Astrocyte of the cerebellum (primary cell): ENCODE measurements at regions of chr6 and their contacts with region 1.

Region 1: DNA sequence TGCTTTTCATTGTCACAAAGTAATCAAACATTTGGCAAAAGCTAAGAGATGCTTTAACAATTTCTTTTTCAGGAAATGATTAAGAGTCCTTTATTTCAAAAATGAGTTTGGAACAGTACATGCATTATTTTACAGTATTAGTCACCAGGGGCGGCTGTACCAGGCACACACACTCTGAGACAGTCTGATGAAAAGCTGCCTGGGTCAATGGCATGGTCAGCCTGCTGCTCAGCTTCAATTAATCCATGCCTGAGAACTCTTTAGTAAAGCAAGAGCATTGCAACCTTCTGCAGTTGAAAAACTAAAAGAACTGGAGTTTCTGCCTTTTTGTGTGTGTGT is 105.5 kb downstream of the TULP4 start:
- DNase-seq: peak; percentile 32
- H3K4me3 ChIP-seq: no peak overlapping the region
- CTCF ChIP-seq: no peak

Region 2: DNA sequence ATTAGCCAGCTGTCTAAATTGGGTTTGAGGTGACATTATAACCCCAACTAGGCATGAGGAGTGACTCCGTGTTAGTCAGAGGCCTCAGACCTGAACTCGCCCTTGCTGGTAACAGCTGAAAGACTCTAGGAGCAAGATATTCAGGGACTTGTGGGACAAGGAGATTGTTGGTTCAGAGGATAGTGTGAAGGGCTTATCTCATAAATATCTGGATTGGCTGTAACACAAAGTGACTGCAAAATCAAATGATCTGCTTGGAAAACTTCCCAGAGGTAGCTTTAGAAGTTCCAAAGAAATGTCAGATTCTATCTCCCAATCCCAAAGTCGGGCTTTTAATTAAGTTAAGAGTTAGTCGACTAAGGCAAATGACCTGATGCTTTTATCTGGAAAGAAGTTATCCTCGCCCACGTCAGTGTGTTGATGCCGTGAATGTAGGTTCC is 33.0 kb before region 1 on chr6:
- in situ Hi-C with region 1: loop called (anchors 5 kb)
- DNase-seq: no peak
- H3K4me3 ChIP-seq: no peak overlapping the region
- CTCF ChIP-seq: no peak

Region 3: DNA sequence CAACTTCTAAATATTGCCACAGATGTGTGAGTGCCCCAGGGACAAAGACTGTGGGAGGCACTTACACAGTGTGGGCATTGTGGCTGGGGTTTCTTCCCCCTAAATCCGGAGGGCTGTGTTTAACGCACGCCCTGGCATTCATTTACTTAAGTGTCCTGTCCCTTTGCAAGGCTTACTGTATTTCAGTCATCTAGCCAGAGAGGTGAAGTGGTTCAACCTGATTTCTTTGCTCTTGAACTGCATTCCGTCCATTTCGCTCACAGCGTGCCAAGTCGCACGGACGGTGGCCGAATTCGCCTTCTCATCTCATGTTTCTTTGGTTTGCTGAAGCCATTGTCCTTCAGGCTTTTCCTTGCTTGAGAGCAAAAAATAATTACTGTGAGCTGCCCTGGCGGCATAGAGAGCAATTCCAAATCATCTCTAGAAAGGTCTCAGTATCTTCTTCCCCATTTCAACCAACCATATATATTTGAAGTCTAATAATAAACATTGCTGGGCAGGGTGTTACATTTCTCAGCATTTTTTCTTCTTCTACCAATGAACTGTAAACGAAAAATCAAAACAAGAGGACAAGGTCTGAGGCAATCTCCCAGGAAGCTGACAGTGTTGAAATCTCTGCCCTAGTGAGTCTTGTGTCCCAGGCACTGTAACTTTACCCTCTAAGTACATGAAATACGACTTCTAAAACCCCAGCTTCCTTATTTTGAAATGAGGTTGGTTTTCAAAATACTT is 249.1 kb after region 1 on chr6:
- in situ Hi-C with region 1: no loop called
- DNase-seq: no peak
- H3K4me3 ChIP-seq: no peak overlapping the region
- CTCF ChIP-seq: no peak